CD8-positive, alpha-beta memory T cell (primary cell): ENCODE measurements at regions of chr5 and their contacts with region 1.

Region 1: DNA sequence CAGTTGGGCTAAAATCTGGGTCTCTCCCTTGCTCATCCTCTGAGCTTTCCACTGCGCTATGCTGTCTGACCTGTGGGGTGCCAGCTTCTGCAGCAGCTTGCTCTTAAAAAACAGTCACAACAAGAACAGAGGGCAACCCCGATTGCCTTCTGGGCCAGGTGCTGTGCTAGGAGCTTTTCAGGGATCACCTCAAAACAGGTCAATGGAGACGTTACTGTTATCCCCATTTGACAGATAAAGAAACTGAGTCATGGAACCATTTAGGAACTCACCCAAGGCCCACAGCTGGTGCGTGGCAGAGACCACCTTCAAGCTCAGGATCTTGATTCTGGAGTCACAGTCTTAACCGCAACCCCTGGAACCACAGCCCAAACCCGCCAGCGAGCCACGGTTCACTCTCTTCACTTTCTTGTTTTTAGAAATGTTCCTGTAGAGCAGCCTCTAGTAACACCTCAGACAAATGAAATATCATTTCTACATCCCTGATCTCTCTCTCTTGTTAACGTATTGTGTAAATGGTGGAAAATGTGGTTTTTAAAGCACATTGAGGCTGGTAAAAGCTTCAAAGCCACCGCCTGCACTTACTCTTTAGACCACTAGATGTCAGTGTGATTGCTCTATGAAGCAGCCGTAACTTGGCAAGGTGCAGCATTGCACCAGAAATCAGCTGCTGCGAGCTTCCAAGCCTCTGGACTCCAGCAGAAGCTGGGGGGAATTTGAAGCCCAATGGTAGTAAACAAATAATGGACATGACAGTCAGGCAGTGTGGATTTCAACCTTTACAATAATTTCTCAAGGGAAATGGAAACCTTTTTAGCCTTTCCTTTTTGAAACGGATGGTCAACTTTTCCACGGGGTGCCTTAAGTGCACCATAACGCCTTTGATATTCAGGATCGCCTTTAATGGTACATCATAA is 1.7 kb downstream of the FYB1 start:
- DNase-seq: peak; percentile 57 to 86 (median 79)
- H3K4me3 ChIP-seq: peak overlapping the region; percentile 62
- H3K4me3 Mint-ChIP-seq: peak overlapping the region; percentile 75 to 89 (median 81)
- H3K27ac ChIP-seq: peak overlapping the region; percentile 58
- H3K27ac Mint-ChIP-seq: peak overlapping the region; percentile 82 to 99 (median 94)
- H3K4me1 ChIP-seq: peaks cover 71% of the 10 kb centered on the region
- H3K4me1 Mint-ChIP-seq: peaks cover 76 to 81% (median 77%) of the 10 kb centered on the region in 3 donors
- H3K27me3 ChIP-seq: no peaks in the 10 kb centered on the region
- H3K27me3 Mint-ChIP-seq: no peaks in the 10 kb centered on the region

Region 2: DNA sequence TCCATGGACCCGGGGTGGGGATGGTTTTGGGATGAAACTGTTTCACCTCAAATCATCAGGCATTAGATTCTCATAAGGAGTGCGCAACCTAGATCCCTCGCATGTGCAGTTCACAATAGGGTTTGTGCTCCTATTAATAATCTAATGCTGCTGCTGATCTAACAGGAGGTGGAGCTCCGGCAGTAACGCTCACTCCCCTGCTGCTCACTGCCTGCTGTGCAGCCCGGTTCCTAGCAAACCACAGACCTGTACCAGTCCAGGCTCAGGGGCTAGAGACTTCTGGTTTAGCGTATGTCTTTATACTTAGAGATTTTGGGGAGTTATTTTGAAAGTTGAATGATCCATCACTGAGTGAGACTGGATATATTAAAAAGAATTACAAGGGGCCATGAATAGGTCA is 193.6 kb before region 1 on chr5:
- CTCF ChIA-PET with region 1: no interaction called
- POLR2A ChIA-PET with region 1: no interaction called
- DNase-seq: no peak
- H3K4me3 ChIP-seq: no peak overlapping the region
- H3K4me3 Mint-ChIP-seq: no peak overlapping the region
- H3K27ac ChIP-seq: no peak overlapping the region
- H3K27ac Mint-ChIP-seq: no peak overlapping the region
- H3K4me1 ChIP-seq: peaks cover 30% of the 10 kb centered on the region
- H3K4me1 Mint-ChIP-seq: peaks cover 53 to 71% (median 69%) of the 10 kb centered on the region in 3 donors
- H3K27me3 ChIP-seq: no peaks in the 10 kb centered on the region
- H3K27me3 Mint-ChIP-seq: no peaks in the 10 kb centered on the region

Region 3: DNA sequence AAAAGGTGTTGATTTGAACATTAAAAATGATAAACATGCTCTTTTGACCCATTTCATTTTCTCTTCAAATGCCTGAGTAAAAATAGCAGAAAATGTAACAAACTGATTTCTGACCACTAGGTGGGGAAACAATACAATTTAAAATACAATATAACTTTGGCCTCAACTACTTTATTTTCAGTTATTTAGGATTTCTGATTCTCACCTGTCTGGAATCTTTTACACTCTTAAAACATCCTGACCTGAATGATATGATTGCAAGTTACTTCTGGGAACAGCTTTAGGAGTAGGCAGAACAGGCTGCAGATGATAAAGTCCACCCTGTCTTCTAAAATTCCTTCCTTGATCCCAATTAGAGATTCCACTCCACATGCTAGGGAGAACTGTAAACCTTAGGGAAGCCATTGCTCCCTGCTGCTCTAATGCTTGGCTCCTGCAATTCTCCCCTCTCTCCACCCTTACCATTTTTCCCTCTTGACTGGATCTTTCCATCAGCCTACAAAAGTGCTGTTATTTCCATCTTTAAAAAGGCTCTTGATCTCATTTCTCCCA is 68.6 kb before region 1 on chr5:
- CTCF ChIA-PET with region 1: interaction called, 37 read pairs
- POLR2A ChIA-PET with region 1: interaction called, 3 read pairs
- DNase-seq: peak in 2 of 5 donors; percentile 20 to 46
- H3K4me3 ChIP-seq: no peak overlapping the region
- H3K4me3 Mint-ChIP-seq: peak overlapping the region in 2 of 7 donors; percentile 3 to 7
- H3K27ac ChIP-seq: no peak overlapping the region
- H3K27ac Mint-ChIP-seq: peak overlapping the region; percentile 68 to 94 (median 80)
- H3K4me1 ChIP-seq: peaks cover 61% of the 10 kb centered on the region
- H3K4me1 Mint-ChIP-seq: peaks cover 67 to 85% (median 76%) of the 10 kb centered on the region in 3 donors
- H3K27me3 ChIP-seq: no peaks in the 10 kb centered on the region
- H3K27me3 Mint-ChIP-seq: no peaks in the 10 kb centered on the region

Region 4: GRCh38 chr5:39164529-39165402 is 52.9 kb before region 1 on chr5:
- CTCF ChIA-PET with region 1: interaction called, 17 read pairs
- POLR2A ChIA-PET with region 1: interaction called, 4 read pairs
- DNase-seq: peak in 1 of 5 donors; percentile 16
- H3K4me3 ChIP-seq: peak overlapping the region; percentile 11
- H3K4me3 Mint-ChIP-seq: peak overlapping the region; percentile 36 to 77 (median 67)
- H3K27ac ChIP-seq: peak overlapping the region; percentile 33
- H3K27ac Mint-ChIP-seq: peak overlapping the region; percentile 40 to 94 (median 90)
- H3K4me1 ChIP-seq: peaks cover 97% of the 10 kb centered on the region
- H3K4me1 Mint-ChIP-seq: peaks cover 89 to 98% (median 97%) of the 10 kb centered on the region in 3 donors
- H3K27me3 ChIP-seq: no peaks in the 10 kb centered on the region
- H3K27me3 Mint-ChIP-seq: no peaks in the 10 kb centered on the region

Region 5: DNA sequence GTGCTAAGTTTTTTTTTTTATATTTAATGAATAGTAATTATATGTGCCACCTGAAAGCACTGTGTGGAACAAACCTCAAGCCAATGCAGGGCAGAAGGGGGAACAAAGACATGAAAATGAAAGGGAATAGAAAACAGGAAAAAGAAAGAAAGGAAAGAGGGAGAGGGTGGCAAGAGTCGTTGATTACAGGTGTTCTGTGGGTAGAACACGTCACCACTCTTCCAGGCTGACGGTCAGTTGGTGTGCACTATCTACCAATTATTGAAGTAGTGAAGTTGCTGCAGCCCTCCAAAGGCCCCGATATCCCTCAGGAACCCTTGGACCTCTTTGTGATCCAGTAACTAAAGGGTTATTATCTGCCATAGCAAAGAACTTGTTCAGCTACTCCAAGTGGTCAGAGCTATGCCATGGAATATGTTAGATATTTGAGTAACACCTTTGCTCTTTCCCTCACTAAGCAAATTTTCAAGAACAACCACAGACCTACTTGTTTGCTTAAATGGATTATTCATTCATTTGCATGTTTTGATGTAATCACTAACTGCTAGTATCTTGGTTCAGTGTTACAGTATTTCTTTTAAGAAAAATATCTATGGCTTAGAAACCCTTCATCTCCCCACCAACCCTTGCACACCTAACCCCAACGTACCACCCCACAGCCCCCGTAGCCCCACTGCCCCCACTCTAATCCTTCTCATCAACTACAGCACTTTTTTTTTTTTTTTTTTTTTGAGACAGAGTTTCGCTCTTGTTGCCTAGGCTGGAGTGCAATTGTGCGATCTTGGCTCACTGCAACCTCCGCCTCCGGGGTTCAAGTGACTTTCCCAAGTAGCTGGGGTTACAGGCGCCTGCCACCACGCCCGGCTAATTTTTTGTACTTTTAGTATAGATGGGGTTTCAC is 29.5 kb before region 1 on chr5:
- CTCF ChIA-PET with region 1: interaction called, 79 read pairs
- POLR2A ChIA-PET with region 1: interaction called, 32 read pairs
- DNase-seq: peak in 2 of 5 donors; percentile 55 to 57
- H3K4me3 ChIP-seq: peak overlapping the region; percentile 23
- H3K4me3 Mint-ChIP-seq: peak overlapping the region; percentile 70 to 89 (median 80)
- H3K27ac ChIP-seq: no peak overlapping the region
- H3K27ac Mint-ChIP-seq: peak overlapping the region; percentile 90 to 99 (median 94)
- H3K4me1 ChIP-seq: peaks cover 92% of the 10 kb centered on the region
- H3K4me1 Mint-ChIP-seq: peaks cover 87 to 98% (median 96%) of the 10 kb centered on the region in 3 donors
- H3K27me3 ChIP-seq: no peaks in the 10 kb centered on the region
- H3K27me3 Mint-ChIP-seq: no peaks in the 10 kb centered on the region

Region 6: GRCh38 chr5:39202597-39203274 is 14.9 kb before region 1 on chr5:
- CTCF ChIA-PET with region 1: interaction called, 156 read pairs
- POLR2A ChIA-PET with region 1: interaction called, 24 read pairs
- DNase-seq: peak in 3 of 5 donors; percentile 33 to 67 (median 53)
- H3K4me3 ChIP-seq: peak overlapping the region; percentile 88
- H3K4me3 Mint-ChIP-seq: peak overlapping the region; percentile 87 to 96 (median 93)
- H3K27ac ChIP-seq: peak overlapping the region; percentile 74
- H3K27ac Mint-ChIP-seq: peak overlapping the region; percentile 89 to 99 (median 93)
- H3K4me1 ChIP-seq: peaks cover 49% of the 10 kb centered on the region
- H3K4me1 Mint-ChIP-seq: peaks cover 45 to 58% (median 56%) of the 10 kb centered on the region in 3 donors
- H3K27me3 ChIP-seq: no peaks in the 10 kb centered on the region
- H3K27me3 Mint-ChIP-seq: no peaks in the 10 kb centered on the region

Region 7: DNA sequence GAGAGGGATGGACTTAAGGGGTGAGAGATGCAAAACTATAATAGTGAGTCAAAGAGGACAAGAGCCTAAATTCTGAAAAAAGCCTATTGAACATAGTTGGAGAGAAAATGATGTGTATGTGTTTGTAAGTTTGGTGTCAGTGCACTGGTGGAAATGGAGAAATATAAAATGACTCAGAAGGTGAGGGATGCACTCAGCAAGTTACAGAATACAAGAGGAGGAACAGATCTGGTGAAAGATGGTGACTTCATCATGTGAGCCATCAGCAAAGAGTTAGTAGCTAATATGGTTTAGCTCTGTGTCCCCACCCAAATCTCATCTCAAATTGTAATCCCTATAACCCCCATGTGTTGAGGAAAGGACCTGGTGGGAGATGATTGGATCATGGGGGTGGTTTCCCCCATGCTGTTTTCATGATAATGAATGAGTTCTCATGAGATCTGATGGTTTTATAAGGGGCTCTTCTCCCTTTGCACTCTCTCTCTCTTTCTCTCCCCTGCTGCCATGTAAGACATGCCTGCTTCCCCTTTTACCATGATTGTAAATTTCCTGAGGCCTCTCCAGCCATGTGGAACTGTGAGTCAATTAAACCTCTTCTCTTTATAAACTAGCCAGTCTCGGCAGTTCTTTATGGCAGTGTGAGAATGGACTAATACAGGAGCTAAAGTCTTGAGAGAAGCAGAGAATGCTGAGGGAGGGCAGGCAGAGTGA is 32.1 kb after region 1 on chr5:
- CTCF ChIA-PET with region 1: interaction called, 11 read pairs
- POLR2A ChIA-PET with region 1: no interaction called
- DNase-seq: no peak
- H3K4me3 ChIP-seq: no peak overlapping the region
- H3K4me3 Mint-ChIP-seq: no peak overlapping the region
- H3K27ac ChIP-seq: no peak overlapping the region
- H3K27ac Mint-ChIP-seq: peak overlapping the region in 2 of 8 donors; percentile 24 to 74
- H3K4me1 ChIP-seq: no peaks in the 10 kb centered on the region
- H3K4me1 Mint-ChIP-seq: peaks cover 4 to 34% (median 13%) of the 10 kb centered on the region in 3 donors
- H3K27me3 ChIP-seq: no peaks in the 10 kb centered on the region
- H3K27me3 Mint-ChIP-seq: no peaks in the 10 kb centered on the region

Region 8: DNA sequence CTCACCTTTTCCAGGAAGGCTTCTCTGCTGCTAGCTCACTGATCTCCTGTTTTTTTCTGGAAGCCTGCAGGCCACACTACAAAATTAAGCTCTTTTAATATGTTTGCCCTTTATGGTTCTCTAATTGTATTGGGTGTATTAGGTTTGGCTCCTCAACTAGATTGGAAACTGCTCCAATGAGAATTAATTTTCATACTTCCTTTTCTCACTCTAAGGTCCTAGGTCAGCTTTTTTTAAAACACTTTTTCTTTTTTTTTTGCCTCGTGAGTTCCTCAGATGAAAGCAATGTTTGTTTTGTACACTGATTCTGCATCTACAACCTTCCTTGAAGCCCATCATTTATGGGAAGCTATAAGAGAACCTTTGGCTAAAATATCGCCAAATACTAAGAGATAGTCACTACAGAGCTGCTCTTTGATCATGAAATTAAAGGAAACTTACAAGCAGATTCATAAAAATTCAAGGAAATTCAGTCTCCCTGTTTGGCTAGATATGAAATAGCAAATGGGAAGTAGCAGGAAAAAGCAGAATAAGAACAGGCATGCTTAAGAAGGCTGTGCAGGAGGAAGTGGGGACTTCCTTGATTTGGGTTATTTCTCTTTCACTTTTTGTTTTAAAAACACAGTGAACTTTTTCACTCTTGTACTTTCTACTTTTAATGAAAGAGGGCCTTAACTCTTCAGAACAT is 56.9 kb after region 1 on chr5:
- CTCF ChIA-PET with region 1: interaction called, 45 read pairs
- POLR2A ChIA-PET with region 1: interaction called, 9 read pairs
- DNase-seq: peak in 2 of 5 donors; percentile 43 to 51
- H3K4me3 ChIP-seq: peak overlapping the region; percentile 49
- H3K4me3 Mint-ChIP-seq: peak overlapping the region; percentile 69 to 87 (median 85)
- H3K27ac ChIP-seq: peak overlapping the region; percentile 40
- H3K27ac Mint-ChIP-seq: peak overlapping the region; percentile 91 to 99 (median 97)
- H3K4me1 ChIP-seq: peaks cover 36% of the 10 kb centered on the region
- H3K4me1 Mint-ChIP-seq: peaks cover 45 to 67% (median 56%) of the 10 kb centered on the region in 3 donors
- H3K27me3 ChIP-seq: no peaks in the 10 kb centered on the region
- H3K27me3 Mint-ChIP-seq: no peaks in the 10 kb centered on the region

Region 9: DNA sequence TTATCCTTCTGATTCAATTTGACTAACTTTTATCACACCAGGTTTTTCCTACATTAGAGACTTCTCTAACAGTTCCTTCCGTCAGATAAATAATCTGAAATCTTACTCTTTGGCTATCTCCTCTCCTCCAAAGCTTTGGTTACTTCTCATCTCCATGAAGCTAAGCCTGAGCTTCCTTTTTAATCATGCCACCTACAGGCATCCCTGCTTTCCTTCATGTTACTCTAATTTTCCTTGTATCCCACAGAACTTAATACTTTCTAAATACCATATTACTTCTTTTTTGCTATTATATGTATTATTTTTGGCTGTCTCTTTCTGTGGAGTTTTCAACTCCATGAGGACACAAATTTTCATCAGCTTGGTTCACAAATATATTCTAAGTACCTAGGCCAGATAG is 97.0 kb after region 1 on chr5:
- CTCF ChIA-PET with region 1: no interaction called
- POLR2A ChIA-PET with region 1: no interaction called
- DNase-seq: no peak
- H3K4me3 ChIP-seq: no peak overlapping the region
- H3K4me3 Mint-ChIP-seq: no peak overlapping the region
- H3K27ac ChIP-seq: no peak overlapping the region
- H3K27ac Mint-ChIP-seq: no peak overlapping the region
- H3K4me1 ChIP-seq: no peaks in the 10 kb centered on the region
- H3K4me1 Mint-ChIP-seq: no peaks in the 10 kb centered on the region
- H3K27me3 ChIP-seq: no peaks in the 10 kb centered on the region
- H3K27me3 Mint-ChIP-seq: peaks cover 9 to 28% of the 10 kb centered on the region in 2 donors

Region 10: GRCh38 chr5:39424736-39425637 is 207.4 kb after region 1 on chr5 and contains the start of gene DAB2:
- CTCF ChIA-PET with region 1: no interaction called
- POLR2A ChIA-PET with region 1: no interaction called
- DNase-seq: peak; percentile 2 to 48 (median 23)
- H3K4me3 ChIP-seq: peak within 1 kb of the TSS; percentile 45
- H3K4me3 Mint-ChIP-seq: peak within 1 kb of the TSS; percentile 75 to 87 (median 81)
- H3K27ac ChIP-seq: no peak within 1 kb of the TSS
- H3K27ac Mint-ChIP-seq: peak within 1 kb of the TSS in 1 of 8 donors; percentile 17
- H3K4me1 ChIP-seq: peaks cover 4% of the 10 kb centered on the region
- H3K4me1 Mint-ChIP-seq: peaks cover 5 to 17% (median 13%) of the 10 kb centered on the region in 3 donors
- H3K27me3 ChIP-seq: peaks cover 22% of the 10 kb centered on the region
- H3K27me3 Mint-ChIP-seq: peaks cover 38 to 76% of the 10 kb centered on the region in 2 donors
- total RNA-seq, gene DAB2: 2.0 to 2.7 TPM